PC-3 (cell line): ENCODE measurements at regions of chr10 and their contacts with region 1.

Region 1: GRCh38 chr10:122565728-122566206 is 5.2 kb downstream of the DMBT1 start:
- DNase-seq: peak; percentile 88
- ATAC-seq: peak; percentile 69
- H3K4me3 ChIP-seq: peak overlapping the region; percentile 67
- H3K27ac ChIP-seq: no peak overlapping the region
- H3K4me1 ChIP-seq: peaks cover 13% of the 10 kb centered on the region
- H3K27me3 ChIP-seq: peaks cover 5% of the 10 kb centered on the region; the same call in 1 of the 2 replicates
- CTCF ChIP-seq: peak; percentile 85

Region 2: DNA sequence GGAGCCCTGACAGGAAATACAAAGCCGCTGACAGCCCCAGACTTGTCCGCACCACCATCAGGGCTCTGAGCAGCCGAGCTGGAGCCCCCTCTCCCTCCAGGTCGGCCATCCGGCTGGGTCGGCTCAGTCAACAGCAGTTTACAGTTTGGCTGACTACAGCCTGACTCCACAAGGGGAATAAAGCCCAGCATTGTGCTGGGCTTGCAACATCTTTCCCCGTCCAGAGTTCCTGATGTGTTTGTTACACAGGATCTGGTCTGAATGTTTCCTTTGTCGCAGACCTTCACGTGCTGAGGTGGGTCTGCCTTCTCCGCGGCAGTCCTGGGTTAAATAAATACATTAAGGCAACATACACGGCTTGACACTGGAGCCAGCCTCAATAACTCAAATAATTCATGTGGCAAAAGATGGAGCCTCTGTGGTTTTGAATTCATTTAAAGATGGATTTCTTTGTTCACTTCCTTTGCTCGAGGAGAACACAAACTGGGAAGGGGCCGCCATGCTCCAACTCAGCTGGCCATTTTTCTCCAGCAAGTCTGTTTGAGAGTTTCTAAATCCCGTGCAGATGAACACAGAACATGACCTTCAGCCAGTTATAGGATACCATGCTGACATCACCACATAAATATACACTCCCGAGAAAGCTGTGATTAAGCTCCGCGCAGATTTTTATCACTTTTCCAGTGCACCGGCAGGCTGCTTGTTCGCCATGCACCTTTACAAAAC is 1522.5 kb before region 1 on chr10:
- CTCF ChIA-PET with region 1: no interaction called
- POLR2A ChIA-PET with region 1: no interaction called
- intact Hi-C with region 1: no loop called
- DNase-seq: no peak
- ATAC-seq: no peak
- H3K4me3 ChIP-seq: no peak overlapping the region
- H3K27ac ChIP-seq: no peak overlapping the region
- H3K4me1 ChIP-seq: no peaks in the 10 kb centered on the region
- H3K27me3 ChIP-seq: peaks cover 31% of the 10 kb centered on the region
- CTCF ChIP-seq: no peak

Region 3: DNA sequence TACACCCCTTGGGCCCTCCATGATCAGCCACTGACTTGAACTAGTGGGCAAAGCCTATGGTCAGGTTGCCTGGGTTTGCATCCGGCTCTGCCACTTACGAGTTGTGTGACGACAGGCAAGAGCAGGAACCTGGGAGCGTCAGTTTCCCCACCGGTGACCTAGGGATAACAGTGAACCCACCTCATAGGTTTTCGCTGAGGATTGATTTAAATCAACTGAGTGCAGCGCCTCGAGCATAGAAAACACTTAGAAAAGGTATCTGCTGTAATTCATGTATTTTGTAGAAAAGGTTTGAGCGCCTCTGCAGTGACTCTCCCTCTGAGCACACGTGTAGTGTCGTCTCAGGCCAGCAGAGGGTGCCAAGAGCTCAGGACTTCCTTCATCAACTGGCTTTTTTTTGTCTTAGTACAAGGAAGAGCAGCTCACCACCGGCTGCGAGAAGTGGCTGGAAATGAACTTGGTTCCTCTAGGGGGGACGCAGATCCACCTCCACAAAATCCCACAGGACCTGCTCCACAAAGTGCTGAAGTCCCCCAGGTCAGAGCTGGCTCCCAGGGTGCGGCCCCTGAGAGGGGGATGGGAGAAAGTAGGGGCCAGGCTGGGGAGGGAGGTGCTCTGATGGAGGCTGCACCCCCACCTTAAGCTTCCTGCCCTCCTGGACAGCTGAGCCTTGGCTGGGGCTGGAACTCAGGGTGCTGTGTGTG is 267.0 kb before region 1 on chr10:
- CTCF ChIA-PET with region 1: interaction called, 4 read pairs
- POLR2A ChIA-PET with region 1: no interaction called
- intact Hi-C with region 1: loop called (anchors 5 kb)
- DNase-seq: peak; percentile 82
- ATAC-seq: peak; percentile 83
- H3K4me3 ChIP-seq: no peak overlapping the region
- H3K27ac ChIP-seq: no peak overlapping the region
- H3K4me1 ChIP-seq: peaks cover 22% of the 10 kb centered on the region
- H3K27me3 ChIP-seq: no peaks in the 10 kb centered on the region
- CTCF ChIP-seq: peak; percentile 87

Region 4: DNA sequence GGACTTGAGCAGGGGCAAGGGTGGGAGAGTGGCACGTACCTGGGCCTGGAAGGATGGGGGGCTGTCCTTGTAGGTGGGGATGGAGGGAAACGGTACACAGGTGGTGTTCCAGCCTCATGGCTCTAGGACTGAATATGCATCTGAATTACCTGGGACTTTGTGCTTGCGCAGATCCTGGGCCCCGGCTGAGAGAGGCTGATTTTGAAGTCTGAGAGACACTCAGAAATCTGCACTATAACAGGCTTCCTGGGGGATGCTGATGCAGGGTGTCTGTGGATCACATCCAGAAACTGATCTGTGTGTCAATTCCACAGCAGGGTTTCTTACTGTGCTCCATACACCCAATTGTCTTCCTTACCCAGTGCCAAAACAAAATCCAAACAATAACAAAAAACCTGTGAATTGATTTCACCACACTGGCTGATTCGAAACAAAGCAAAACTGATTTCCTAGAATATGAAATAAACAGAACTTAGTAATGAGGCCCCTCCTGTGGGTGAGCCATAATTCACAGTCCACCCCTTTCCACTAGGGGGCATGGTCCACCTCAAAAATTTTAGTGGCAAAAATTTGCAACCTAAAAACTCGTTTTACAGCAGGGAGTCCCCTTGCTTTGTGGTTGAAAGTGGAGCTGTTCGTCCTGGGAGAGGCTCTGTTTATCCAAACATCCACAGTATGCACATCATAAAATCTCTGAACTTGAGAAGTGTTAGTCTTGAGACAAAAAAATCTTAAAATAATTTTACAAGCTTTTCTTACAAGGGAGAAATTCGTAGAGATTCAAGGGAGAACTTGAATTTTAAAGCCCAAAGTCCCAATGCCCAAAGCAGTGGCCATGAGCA is 223.3 kb before region 1 on chr10:
- CTCF ChIA-PET with region 1: interaction called, 6 read pairs
- POLR2A ChIA-PET with region 1: no interaction called
- intact Hi-C with region 1: loop called (anchors 5 kb)
- DNase-seq: peak; percentile 73
- ATAC-seq: peak; percentile 71
- H3K4me3 ChIP-seq: no peak overlapping the region
- H3K27ac ChIP-seq: no peak overlapping the region
- H3K4me1 ChIP-seq: no peaks in the 10 kb centered on the region; the same call in 1 of the 2 replicates
- H3K27me3 ChIP-seq: no peaks in the 10 kb centered on the region
- CTCF ChIP-seq: peak; percentile 81

Region 5: DNA sequence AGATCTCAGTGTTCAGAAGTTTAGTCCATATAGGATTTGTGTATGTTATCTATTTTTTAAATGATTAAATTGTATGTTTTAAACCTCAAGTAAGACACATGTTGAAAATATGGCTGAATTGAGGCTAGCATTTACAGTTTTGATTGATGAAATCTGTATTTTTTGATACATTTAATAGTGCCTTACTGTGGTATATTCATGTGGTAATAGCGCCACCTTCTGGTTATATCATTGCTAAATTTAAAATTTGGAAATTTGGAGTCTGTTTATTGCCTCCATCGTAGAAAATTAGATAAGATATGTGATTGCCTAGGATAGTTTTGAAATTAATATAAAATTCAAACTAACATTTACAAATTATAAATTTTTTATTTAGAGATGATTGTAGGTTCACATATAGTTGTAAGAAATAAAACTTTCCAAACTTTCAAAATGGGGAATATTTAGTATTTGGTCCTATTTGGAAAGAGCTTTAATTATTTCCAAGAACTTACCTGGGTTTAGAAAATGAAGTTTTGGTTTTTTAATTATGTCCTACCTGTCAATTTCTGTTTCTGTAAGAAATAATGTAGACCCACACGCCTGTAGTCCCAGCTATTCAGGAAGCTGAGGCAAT is 130.4 kb before region 1 on chr10:
- CTCF ChIA-PET with region 1: interaction called, 3 read pairs
- POLR2A ChIA-PET with region 1: no interaction called
- intact Hi-C with region 1: loop called (anchors 5 kb)
- DNase-seq: peak; percentile 75
- ATAC-seq: peak; percentile 22; the same call in 1 of the 2 replicates
- H3K4me3 ChIP-seq: no peak overlapping the region
- H3K27ac ChIP-seq: no peak overlapping the region
- H3K4me1 ChIP-seq: no peaks in the 10 kb centered on the region
- H3K27me3 ChIP-seq: no peaks in the 10 kb centered on the region
- CTCF ChIP-seq: peak; percentile 72

Region 6: GRCh38 chr10:122468926-122469781 is 96.6 kb before region 1 on chr10:
- CTCF ChIA-PET with region 1: interaction called, 9 read pairs
- POLR2A ChIA-PET with region 1: interaction called, 3 read pairs
- intact Hi-C with region 1: loop called (anchors 5 kb)
- DNase-seq: peak; percentile 91
- ATAC-seq: peak; percentile 88
- H3K4me3 ChIP-seq: no peak overlapping the region
- H3K27ac ChIP-seq: peak overlapping the region; percentile 74
- H3K4me1 ChIP-seq: peaks cover 27% of the 10 kb centered on the region
- H3K27me3 ChIP-seq: no peaks in the 10 kb centered on the region
- CTCF ChIP-seq: 0 out of 2 replicates have a peak, but pooled peaks have one; percentile 18

Region 7: GRCh38 chr10:122525788-122526187 is 40.0 kb before region 1 on chr10:
- CTCF ChIA-PET with region 1: interaction called, 3 read pairs
- POLR2A ChIA-PET with region 1: no interaction called
- intact Hi-C with region 1: loop called (anchors 1 kb)
- DNase-seq: peak; percentile 33
- ATAC-seq: peak; percentile 46
- H3K4me3 ChIP-seq: no peak overlapping the region
- H3K27ac ChIP-seq: no peak overlapping the region
- H3K4me1 ChIP-seq: no peaks in the 10 kb centered on the region
- H3K27me3 ChIP-seq: no peaks in the 10 kb centered on the region
- CTCF ChIP-seq: peak; percentile 52; the same call in 1 of the 2 replicates

Region 8: DNA sequence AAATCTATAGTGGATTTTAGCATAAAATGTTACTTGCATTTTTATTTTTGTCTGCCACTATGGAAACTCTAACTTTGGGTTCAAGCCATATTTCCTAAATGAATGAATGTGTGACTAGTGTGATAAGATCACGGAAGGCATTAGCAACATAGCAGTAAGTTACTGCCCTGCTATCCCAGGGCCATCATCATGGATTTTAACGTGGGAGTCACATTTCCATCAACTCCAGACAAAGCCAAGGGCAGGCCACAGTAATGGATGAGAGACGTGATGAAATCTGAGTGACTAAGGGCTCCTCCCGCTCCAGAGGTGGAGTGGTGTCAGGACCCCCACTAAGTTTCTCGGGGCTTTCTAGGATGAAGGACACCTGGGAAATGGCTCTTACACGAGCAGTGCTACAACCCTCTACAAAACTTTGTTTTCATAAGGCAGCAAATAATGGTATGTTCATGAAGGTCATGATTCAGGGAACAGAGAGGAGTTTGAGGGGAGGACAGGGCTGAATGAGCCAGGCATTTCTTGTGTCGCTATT is 99.6 kb after region 1 on chr10:
- CTCF ChIA-PET with region 1: no interaction called
- POLR2A ChIA-PET with region 1: no interaction called
- intact Hi-C with region 1: no loop called
- DNase-seq: no peak
- ATAC-seq: no peak
- H3K4me3 ChIP-seq: no peak overlapping the region
- H3K27ac ChIP-seq: no peak overlapping the region
- H3K4me1 ChIP-seq: no peaks in the 10 kb centered on the region
- H3K27me3 ChIP-seq: peaks cover 51% of the 10 kb centered on the region
- CTCF ChIP-seq: no peak

Region 9: DNA sequence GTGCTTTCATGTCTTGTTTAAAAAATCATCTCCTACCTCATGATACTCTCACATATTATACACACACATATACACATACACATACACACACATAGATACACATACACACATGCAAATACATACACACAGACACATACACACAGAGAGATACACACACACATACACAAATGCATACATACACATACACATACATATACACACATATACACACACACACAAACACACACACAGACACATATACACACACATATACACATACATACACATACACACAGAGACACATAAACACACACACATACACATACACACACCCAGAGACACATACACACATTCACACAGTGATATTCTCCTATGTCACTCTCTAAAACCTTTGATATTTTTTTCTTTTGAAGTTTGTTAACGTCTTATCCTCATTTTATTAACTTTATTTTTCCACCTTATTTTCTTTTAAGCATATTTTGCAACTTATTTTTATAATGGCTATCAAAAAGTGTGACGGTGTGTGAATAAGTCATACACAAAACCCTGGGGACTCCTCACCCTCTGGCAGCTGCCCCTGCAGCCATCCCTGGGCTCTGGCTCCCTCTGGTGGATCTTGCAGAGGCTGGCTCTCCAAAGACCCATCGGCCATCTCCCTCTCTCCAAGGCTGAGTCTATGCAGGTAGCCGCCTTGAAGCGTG is 137.8 kb after region 1 on chr10:
- CTCF ChIA-PET with region 1: no interaction called
- POLR2A ChIA-PET with region 1: no interaction called
- intact Hi-C with region 1: loop called (anchors 10 kb)
- DNase-seq: peak; percentile 68
- ATAC-seq: peak; percentile 94
- H3K4me3 ChIP-seq: no peak overlapping the region
- H3K27ac ChIP-seq: no peak overlapping the region
- H3K4me1 ChIP-seq: no peaks in the 10 kb centered on the region
- H3K27me3 ChIP-seq: no peaks in the 10 kb centered on the region
- CTCF ChIP-seq: peak; percentile 87